ENCODE measurements at regions of chr17 and their contacts with region 1.

Region 1: DNA sequence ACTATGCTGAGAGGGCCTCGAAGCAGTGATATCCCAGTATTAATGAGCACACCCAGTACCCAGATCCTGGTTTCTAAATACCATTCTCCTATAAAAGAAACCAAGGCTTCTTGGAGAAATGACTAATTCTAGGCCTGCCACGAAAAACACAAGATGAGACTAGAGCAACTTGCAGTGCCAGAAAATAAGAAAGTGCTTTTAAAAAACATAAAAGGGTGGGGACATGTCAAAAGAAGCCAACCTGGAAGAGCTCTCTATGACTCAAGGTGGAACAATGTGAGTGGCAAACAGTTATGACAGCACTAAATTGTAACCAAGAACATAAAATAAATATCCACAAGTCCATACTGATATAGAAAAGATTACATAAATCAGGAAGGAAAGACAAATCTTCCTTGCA is 153.2 kb upstream of the KCNJ18 start:
- DNase-seq: peak in 1 of 2 experiments; percentile 67
- H3K4me3 ChIP-seq: no peak overlapping the region
- H3K27ac ChIP-seq: no peak overlapping the region
- H3K4me1 ChIP-seq: 0 out of 2 replicates have a peak, but pooled peaks cover 13% of the 10 kb centered on the region
- H3K27me3 ChIP-seq: no peaks in the 10 kb centered on the region
- CTCF ChIP-seq: no peak

Region 2: GRCh38 chr17:21445091-21445650 is 94.0 kb before region 1 on chr17:
- CTCF ChIA-PET with region 1: no interaction called
- POLR2A ChIA-PET with region 1: no interaction called
- intact Hi-C with region 1: no loop called
- DNase-seq: no peak
- H3K4me3 ChIP-seq: no peak overlapping the region
- H3K27ac ChIP-seq: no peak overlapping the region
- H3K4me1 ChIP-seq: no peaks in the 10 kb centered on the region
- H3K27me3 ChIP-seq: no peaks in the 10 kb centered on the region
- CTCF ChIP-seq: no peak

Region 3: GRCh38 chr17:21551081-21551881 is 12.1 kb after region 1 on chr17:
- CTCF ChIA-PET with region 1: interaction called, 3 read pairs
- POLR2A ChIA-PET with region 1: interaction called, 10 read pairs
- intact Hi-C with region 1: no loop called
- DNase-seq: peak; percentile 54 to 76
- H3K4me3 ChIP-seq: peak overlapping the region; percentile 86
- H3K27ac ChIP-seq: no peak overlapping the region
- H3K4me1 ChIP-seq: peaks cover 21% of the 10 kb centered on the region; the same call in 1 of the 2 replicates
- H3K27me3 ChIP-seq: peaks cover 20% of the 10 kb centered on the region; the same call in 1 of the 2 replicates
- CTCF ChIP-seq: no peak

Measured in PC-9 (cell line).